HepG2 (cell line): ENCODE measurements at regions of chr1 and their contacts with region 1.

Region 1: GRCh38 chr1:205273551-205273982 is 45.8 kb downstream of the TMCC2 start:
- DNase-seq: peak; percentile 65
- ATAC-seq: peak; percentile 86
- H3K4me3 ChIP-seq: no peak overlapping the region
- H3K27ac ChIP-seq: no peak overlapping the region
- H3K4me1 ChIP-seq: peaks cover 32% of the 10 kb centered on the region
- H3K27me3 ChIP-seq: peaks cover 2 to 28% of the 10 kb centered on the region in 2 experiments; a peak in 4 of 5 replicates
- CTCF ChIP-seq: peak; percentile 98
- EP300 ChIP-seq: no peak; a peak in 1 of 4 replicates
- POLR2A ChIP-seq: no peak
- RAD21 ChIP-seq: peak; percentile 99

Region 2: GRCh38 chr1:205294175-205294913 is 20.8 kb after region 1 on chr1:
- CTCF ChIA-PET with region 1: no interaction called
- POLR2A ChIA-PET with region 1: interaction called, 5 read pairs
- in situ Hi-C with region 1: no loop called
- intact Hi-C with region 1: loop called (anchors 2 kb)
- DNase-seq: peak; percentile 89
- ATAC-seq: peak; percentile 83
- H3K4me3 ChIP-seq: peak overlapping the region in 2 of 3 experiments; percentile 28 to 66; a peak in 5 of 6 replicates
- H3K27ac ChIP-seq: peak overlapping the region; percentile 86
- H3K4me1 ChIP-seq: peaks cover 82% of the 10 kb centered on the region
- H3K27me3 ChIP-seq: no peaks in the 10 kb centered on the region
- CTCF ChIP-seq: peak; percentile 18; the same call in 1 of the 2 replicates
- EP300 ChIP-seq: peak in 1 of 2 experiments; percentile 42; a peak in 1 of 4 replicates
- POLR2A ChIP-seq: peak in 1 of 2 experiments; percentile 63; a peak in 2 of 4 replicates
- RAD21 ChIP-seq: no peak; the same call in 1 of the 2 replicates